SK-N-SH (cell line): ENCODE measurements at regions of chr1 and their contacts with region 1.

Region 1: DNA sequence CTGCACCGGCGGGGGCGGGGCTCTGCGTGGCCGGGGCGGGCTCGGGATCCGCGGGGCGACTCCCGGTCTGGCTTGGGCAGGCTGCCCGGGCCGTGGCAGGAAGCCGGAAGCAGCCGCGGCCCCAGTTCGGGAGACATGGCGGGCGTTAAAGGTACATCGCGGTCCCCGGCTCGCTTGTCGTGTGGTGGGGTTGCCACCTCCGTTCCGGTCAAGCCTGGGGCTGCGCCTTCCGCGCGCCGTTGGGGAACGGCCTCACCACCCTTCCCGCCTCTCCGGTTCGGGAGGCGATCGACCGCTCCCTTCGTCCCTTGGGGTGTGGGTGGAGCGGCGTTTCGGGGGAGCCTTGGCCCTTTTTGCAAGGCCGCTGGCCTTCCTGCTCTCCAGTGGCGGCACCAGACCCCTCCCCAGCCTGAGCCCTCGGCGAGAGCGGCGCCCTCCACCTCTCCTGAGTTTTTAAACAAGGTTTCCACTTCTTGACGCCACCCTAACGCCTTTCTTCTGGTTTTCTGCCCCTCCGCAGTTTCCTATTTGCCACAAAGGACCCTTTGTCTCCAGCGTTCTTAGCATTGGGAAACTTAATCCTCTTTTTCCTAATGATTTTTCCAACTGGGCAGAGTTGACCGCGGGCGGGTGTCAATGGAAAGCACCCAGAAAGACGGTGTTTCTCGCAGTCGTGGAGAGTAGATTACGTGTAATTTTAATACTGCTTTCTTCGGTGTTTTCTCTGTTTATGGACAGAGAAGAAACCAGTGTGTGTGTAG is at the starts of genes LEPR and LEPROT:
- DNase-seq: no peak
- H3K4me3 ChIP-seq: peak within 1 kb of the TSS; percentile 84 to 95
- H3K27ac ChIP-seq: peak within 1 kb of the TSS; percentile 95 to 97
- H3K4me1 ChIP-seq: peaks cover 13 to 23% of the 10 kb centered on the region in 2 experiments
- H3K27me3 ChIP-seq: no peaks in the 10 kb centered on the region
- CTCF ChIP-seq: no peak
- EP300 ChIP-seq: no peak
- RAD21 ChIP-seq: no peak
- polyA plus RNA-seq, gene LEPR: 2.3 and 3.2 TPM in 2 replicates
- polyA plus RNA-seq, gene LEPROT: 38.9 and 69.3 TPM in 2 replicates

Region 2: GRCh38 chr1:65214340-65215027 is 206.3 kb before region 1 on chr1:
- CTCF ChIA-PET with region 1: no interaction called
- POLR2A ChIA-PET with region 1: no interaction called
- DNase-seq: no peak
- H3K4me3 ChIP-seq: no peak overlapping the region
- H3K27ac ChIP-seq: no peak overlapping the region
- H3K4me1 ChIP-seq: no peaks in the 10 kb centered on the region
- H3K27me3 ChIP-seq: no peaks in the 10 kb centered on the region
- CTCF ChIP-seq: no peak
- EP300 ChIP-seq: no peak
- RAD21 ChIP-seq: no peak

Region 3: DNA sequence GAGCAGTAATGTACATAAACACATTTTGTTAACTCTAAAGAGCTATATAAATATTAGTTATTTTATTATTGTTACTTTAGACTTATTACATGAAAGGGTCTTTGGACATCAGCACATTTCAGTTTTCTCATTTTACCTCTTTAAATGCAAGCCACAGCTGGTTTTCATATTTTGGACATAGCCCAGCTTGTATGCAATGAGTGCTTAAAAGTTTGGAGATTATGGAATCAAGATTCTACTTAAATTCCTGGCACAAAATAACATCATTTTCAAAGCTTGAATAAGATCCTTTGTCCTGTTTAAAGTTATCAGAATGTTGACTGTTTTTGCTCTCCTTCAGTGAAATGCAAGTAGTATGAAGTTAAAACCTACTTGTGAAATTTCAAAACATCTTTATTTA is 15.8 kb before region 1 on chr1:
- CTCF ChIA-PET with region 1: no interaction called
- POLR2A ChIA-PET with region 1: no interaction called
- DNase-seq: no peak
- H3K4me3 ChIP-seq: no peak overlapping the region
- H3K27ac ChIP-seq: no peak overlapping the region
- H3K4me1 ChIP-seq: no peaks in the 10 kb centered on the region
- H3K27me3 ChIP-seq: no peaks in the 10 kb centered on the region
- CTCF ChIP-seq: no peak
- EP300 ChIP-seq: no peak
- RAD21 ChIP-seq: no peak

Region 4: GRCh38 chr1:65431111-65431705 is 10.4 kb after region 1 on chr1:
- CTCF ChIA-PET with region 1: interaction called, 10 read pairs
- POLR2A ChIA-PET with region 1: no interaction called
- DNase-seq: peak; percentile 47
- H3K4me3 ChIP-seq: no peak overlapping the region
- H3K27ac ChIP-seq: peak overlapping the region in 1 of 2 experiments; percentile 77; a peak in 1 of 4 replicates
- H3K4me1 ChIP-seq: peaks cover 0 to 17% of the 10 kb centered on the region in 2 experiments; a peak in 3 of 4 replicates
- H3K27me3 ChIP-seq: no peaks in the 10 kb centered on the region
- CTCF ChIP-seq: peak; percentile 78
- EP300 ChIP-seq: no peak
- RAD21 ChIP-seq: peak; percentile 82